ENCODE measurements at regions of chr9 and their contacts with region 1.

Region 1: GRCh38 chr9:36023260-36024048 is 13.3 kb upstream of the RECK start:
- DNase-seq: peak; percentile 51 to 68 (median 57)
- ATAC-seq: peak; percentile 55 to 80 (median 65)
- H3K4me3 ChIP-seq: no peak overlapping the region
- H3K27ac ChIP-seq: no peak overlapping the region
- H3K4me1 ChIP-seq: peaks cover 0 to 4% (median 0%) of the 10 kb centered on the region in 12 donors
- H3K27me3 ChIP-seq: no peaks in the 10 kb centered on the region
- CTCF ChIP-seq: peak; percentile 71 to 83 (median 80)
- POLR2A ChIP-seq: no peak

Region 2: DNA sequence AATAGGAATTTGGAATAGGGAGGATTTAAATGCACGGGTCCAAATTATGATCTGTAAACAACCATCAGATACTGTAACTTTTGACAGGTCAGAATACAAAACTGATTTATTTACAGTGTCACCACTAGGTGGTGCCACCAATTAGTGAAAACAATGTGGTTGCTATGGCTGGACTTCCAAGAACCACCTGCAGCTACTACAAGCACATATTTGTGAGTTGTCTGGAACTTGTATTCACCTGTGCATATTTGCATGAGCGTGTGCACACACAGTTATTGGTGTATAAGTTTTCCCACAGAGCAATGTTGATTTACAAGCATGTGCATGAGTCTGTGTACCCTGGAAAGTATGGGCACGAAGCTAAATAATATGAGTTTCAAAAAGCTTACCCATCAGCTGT is 120.4 kb before region 1 on chr9:
- intact Hi-C with region 1: loop called (anchors 2 to 5 kb)
- DNase-seq: peak in 2 of 5 donors; percentile 37 to 44
- ATAC-seq: no peak
- H3K4me3 ChIP-seq: no peak overlapping the region
- H3K27ac ChIP-seq: peak overlapping the region in 1 of 12 donors; percentile 95
- H3K4me1 ChIP-seq: peaks cover 16 to 54% (median 48%) of the 10 kb centered on the region in 12 donors
- H3K27me3 ChIP-seq: no peaks in the 10 kb centered on the region
- CTCF ChIP-seq: peak; percentile 62 to 86 (median 78)
- POLR2A ChIP-seq: no peak

Region 3: DNA sequence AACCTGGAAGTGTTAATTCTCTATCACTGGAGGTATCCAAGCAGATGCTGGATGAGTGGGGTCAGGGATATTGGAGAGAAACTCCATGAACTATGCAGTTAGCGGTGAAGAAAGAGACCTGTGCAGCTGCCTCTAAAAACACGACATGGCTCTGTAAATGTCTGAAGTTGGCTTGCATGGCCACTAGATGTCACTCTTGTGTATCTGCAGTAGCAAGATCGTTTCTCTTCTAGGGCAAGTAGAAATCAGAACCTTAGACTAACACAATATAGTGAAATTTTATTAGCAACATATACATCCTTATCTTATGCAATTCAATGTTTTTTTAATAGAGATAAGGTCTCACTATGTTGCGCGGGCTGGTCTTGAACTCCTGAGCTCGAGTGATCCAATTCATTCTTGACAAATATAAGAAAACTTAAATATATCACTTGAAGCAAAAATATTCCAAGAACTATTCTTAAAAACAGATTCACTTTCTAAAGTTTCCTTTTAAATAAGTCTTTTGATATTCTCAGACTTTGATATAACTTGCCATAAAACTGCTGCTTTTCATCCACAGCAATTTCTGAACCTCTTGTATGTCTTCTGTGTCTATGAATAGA is 68.4 kb before region 1 on chr9:
- intact Hi-C with region 1: loop called (anchors 1 to 5 kb)
- DNase-seq: peak in 2 of 5 donors; percentile 50 to 54
- ATAC-seq: peak in 3 of 4 donors; percentile 75 to 84 (median 79)
- H3K4me3 ChIP-seq: no peak overlapping the region
- H3K27ac ChIP-seq: no peak overlapping the region
- H3K4me1 ChIP-seq: peaks cover 0 to 10% (median 0%) of the 10 kb centered on the region in 12 donors
- H3K27me3 ChIP-seq: peaks cover 0 to 6% (median 0%) of the 10 kb centered on the region in 9 donors
- CTCF ChIP-seq: peak; percentile 83 to 94 (median 88)
- POLR2A ChIP-seq: no peak